ENCODE measurements at regions of chr21 and their contacts with region 1.

Region 1: DNA sequence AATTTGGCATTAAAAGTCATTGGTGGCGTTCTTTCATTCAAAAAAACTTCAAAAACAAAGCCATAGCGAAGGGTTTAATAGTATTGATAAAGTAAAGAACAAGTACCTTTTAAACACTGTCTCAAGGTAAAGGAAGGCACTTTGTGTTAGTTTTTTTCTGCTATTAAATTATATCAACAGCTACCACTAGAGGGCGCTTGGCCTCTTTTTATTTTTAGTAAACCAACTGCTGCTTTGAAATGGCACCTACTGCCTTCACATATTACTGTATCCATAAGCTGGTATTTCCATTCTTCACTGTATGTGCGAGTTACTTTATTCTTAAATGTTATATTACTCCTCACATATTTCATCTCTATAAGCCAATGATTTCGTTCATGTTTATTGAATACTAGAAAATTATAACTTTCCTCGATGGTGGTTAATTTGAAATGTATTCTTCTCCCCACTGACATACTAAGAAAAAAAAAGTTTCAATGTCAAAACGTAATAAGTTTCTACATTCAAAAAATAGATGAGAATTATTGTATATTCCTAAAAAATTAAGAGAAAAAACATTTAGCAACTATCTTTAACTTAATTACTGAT is 125.7 kb upstream of the CXADR start:
- DNase-seq: peak; percentile 69
- ATAC-seq: no peak
- H3K4me3 Mint-ChIP-seq: no peak overlapping the region
- H3K27ac Mint-ChIP-seq: no peak overlapping the region
- H3K4me1 Mint-ChIP-seq: no peaks in the 10 kb centered on the region
- H3K27me3 Mint-ChIP-seq: peaks cover 5% of the 10 kb centered on the region

Region 2: GRCh38 chr21:17554679-17555465 is 167.7 kb after region 1 on chr21:
- CTCF ChIA-PET with region 1: interaction called, 11 read pairs
- POLR2A ChIA-PET with region 1: no interaction called
- DNase-seq: no peak
- ATAC-seq: no peak
- H3K4me3 Mint-ChIP-seq: no peak overlapping the region
- H3K27ac Mint-ChIP-seq: no peak overlapping the region
- H3K4me1 Mint-ChIP-seq: no peaks in the 10 kb centered on the region
- H3K27me3 Mint-ChIP-seq: no peaks in the 10 kb centered on the region

Region 3: GRCh38 chr21:17585875-17586450 is 198.8 kb after region 1 on chr21:
- CTCF ChIA-PET with region 1: interaction called, 39 read pairs
- POLR2A ChIA-PET with region 1: no interaction called
- DNase-seq: peak; percentile 33
- ATAC-seq: no peak
- H3K4me3 Mint-ChIP-seq: no peak overlapping the region
- H3K27ac Mint-ChIP-seq: no peak overlapping the region
- H3K4me1 Mint-ChIP-seq: no peaks in the 10 kb centered on the region
- H3K27me3 Mint-ChIP-seq: peaks cover 4% of the 10 kb centered on the region